ENCODE measurements at regions of chr12 and their contacts with region 1.

Region 1: DNA sequence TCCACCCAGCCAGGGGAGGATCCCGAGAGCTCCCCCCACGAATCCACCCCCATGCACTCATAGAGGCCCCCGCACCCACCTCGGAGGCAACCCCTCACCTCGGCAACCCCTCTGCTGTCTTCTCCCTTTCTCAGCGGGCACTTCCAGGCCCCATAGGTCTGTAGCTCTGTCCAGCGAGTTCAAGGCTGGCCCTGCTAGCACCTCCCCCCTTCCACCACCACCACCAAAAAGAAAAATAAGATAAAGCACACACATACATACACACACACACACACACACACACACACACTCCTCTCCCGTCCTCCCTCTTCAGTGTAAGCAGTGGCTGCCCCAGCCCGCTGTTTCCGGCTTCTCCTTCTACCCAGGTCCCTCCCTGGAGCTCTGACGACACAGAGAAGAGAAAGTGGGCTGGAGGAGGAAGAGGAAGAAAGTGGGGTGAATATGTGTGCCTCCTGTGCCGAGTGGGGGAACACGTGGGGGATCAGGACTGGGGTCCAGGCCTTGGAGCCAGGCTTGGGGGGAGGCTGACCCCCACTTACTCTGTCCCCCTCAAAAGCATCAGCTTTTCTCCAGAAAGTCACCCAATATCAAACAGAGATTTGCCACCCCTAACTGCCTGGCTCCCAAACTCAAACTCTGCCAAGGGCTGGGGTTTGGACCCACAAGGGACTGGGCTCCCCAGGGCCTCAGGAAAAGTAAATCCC is at the start of gene STAT6:
- DNase-seq: peak; percentile 80
- CTCF ChIP-seq: no peak

Region 2: DNA sequence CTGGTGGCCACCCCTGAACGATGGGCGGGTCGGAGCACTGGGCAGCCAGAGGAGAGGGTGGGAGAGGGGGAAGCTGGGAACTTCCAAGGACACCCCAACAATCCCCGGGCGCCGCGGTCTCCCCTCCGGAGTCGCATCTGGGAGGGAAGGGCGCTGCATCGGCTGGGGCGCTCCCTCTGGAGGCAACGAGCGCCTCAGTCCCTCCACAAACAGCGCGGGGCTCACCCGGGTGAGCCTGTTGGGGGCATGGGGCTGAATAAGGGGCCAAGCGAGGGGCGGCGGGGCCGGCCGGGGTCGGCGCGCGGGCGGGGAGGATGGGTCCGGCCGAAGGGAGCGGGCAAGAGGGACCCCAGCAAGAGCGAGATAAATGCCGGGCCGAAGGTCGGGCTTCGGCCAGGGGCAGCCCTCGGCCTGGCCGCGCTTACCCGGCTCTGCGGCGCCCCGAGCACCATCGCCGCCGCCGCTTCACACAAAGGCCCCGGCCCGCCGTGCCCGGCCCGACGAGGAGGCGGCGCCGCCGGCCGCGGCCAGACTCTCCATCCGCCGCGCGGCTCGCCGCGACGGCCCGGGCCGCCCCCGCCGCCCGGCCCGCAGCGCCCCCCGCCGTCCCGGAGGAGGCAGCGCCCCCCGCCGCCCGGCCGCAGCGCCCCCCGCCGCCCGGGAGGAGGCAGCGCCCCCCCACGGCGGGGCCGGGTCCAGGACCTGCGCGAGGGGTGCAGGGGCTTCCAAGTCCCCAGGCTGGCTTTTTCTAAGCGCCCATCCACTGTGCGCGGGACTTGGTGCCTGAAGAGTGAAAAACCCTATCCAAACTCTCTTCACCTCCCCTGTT is 105.0 kb before region 1 on chr12 and contains the start of gene ZBTB39:
- CTCF ChIA-PET with region 1: interaction called, 34 read pairs
- POLR2A ChIA-PET with region 1: no interaction called
- DNase-seq: peak; percentile 92
- CTCF ChIP-seq: peak; percentile 71

Region 3: GRCh38 chr12:57031138-57031725 is 80.0 kb before region 1 on chr12:
- CTCF ChIA-PET with region 1: interaction called, 10 read pairs
- POLR2A ChIA-PET with region 1: no interaction called
- DNase-seq: peak; percentile 61
- CTCF ChIP-seq: no peak

Region 4: GRCh38 chr12:57063991-57064685 is 47.0 kb before region 1 on chr12:
- CTCF ChIA-PET with region 1: interaction called, 224 read pairs
- POLR2A ChIA-PET with region 1: interaction called, 15 read pairs
- DNase-seq: peak; percentile 79
- CTCF ChIP-seq: no peak

Region 5: DNA sequence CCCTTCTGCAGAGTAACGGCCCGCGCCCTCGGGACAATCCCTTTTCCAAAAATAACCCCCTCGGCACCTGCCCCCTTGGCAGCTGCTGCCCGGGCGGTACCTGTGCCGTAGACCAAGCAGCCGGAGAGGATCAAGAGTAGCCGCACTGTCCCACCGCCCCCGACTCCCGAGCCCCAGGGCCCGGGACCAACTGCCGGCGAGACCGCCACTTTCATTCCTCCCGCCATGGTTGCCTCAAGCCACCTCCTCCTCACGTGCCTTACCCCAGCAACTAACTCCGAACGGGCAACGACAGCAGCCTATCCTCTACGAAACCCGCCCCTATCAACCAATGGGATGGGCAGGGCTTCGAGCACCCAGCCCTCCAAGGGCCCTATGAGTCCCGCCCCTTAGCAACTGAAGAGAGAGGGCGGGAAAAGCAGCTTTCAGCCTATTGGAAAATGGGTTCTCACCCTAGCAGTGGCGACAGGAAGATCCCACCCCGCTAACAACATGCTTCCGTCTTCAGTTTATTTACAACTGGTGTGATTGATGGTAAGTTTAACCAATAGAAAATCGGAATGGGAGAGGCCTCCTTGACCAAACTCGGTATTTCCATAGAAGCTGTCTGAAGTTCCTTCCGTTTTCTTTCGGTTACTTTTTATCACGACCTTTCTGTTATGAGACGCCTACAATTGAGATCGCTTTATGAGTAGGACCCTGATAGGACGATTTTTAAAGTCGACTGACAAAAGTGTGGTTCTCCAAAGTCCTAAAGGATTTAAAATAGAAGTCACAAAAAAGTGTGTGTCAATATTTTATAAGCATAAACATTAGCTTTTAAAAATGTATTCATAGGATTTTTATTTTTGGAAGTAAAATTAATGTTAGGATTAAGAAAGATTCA is 32.4 kb before region 1 on chr12 and contains the start of gene NEMP1:
- CTCF ChIA-PET with region 1: interaction called, 224 read pairs
- POLR2A ChIA-PET with region 1: interaction called, 7 read pairs
- DNase-seq: peak; percentile 96
- CTCF ChIP-seq: no peak

Region 6: GRCh38 chr12:57124259-57124877 is 13.2 kb after region 1 on chr12:
- CTCF ChIA-PET with region 1: interaction called, 130 read pairs
- POLR2A ChIA-PET with region 1: interaction called, 4 read pairs
- DNase-seq: peak; percentile 70
- CTCF ChIP-seq: peak; percentile 74